ENCODE measurements at regions of chr3 and their contacts with region 1.

Region 1: GRCh38 chr3:108221911-108222852 is at the start of gene IFT57:
- DNase-seq: peak; percentile 99
- H3K4me3 ChIP-seq: peak within 1 kb of the TSS; percentile 77 to 86 (median 82)
- H3K27ac ChIP-seq: peak within 1 kb of the TSS; percentile 77 to 80 (median 78)
- H3K4me1 ChIP-seq: peaks cover 12 to 49% (median 47%) of the 10 kb centered on the region in 4 donors
- H3K27me3 ChIP-seq: no peaks in the 10 kb centered on the region
- CTCF ChIP-seq: peak in 1 of 3 experiments; percentile 9
- EP300 ChIP-seq: no peak
- POLR2A ChIP-seq: peak; percentile 30
- total RNA-seq, gene IFT57: 52.3 to 82.4 (median 61.4) TPM

Region 2: DNA sequence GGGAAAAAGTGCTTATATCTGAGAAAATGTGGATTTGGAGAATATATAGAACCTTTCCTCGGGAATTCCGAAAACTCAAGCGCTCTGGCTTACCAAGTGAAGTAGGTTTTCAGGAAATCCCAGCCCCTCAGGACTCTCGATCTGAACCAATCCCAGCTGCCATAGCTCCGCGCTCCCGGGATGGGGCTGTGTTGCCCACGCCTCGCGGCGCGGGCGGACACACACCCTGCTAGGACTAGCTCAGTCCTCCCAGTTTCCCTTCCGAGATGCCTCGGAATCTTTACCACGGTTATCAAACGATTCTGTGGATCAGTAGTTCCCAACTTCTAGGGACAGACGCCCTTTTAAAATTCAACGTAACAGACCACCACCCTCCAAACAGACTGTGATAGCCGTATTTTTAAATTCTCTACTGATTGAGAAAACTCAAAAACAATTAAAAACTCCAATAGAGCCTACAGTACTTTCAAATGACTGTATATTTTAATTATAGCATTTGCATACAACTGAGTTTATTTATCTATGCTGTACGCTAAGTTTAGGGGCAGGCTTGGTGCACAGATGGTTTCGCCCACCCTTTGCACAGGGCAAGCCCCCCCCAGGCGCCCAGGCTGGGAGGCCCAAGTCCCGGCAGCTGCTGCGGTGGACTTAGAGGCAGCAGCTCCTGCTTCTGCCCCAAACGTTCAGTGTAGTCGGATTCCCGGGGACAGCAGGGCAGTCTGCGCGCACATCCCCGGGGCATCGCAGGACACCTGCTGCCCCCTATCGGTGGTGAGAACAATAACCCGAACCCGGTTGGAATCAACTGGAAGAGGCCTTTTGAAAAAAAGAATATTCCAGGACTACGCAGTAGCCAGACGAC is 792.6 kb before region 1 on chr3:
- intact Hi-C with region 1: loop called (anchors 5 kb)
- DNase-seq: no peak
- H3K4me3 ChIP-seq: peak overlapping the region; percentile 80 to 96 (median 87)
- H3K27ac ChIP-seq: peak overlapping the region; percentile 97 to 99 (median 97)
- H3K4me1 ChIP-seq: peaks cover 5 to 26% (median 18%) of the 10 kb centered on the region in 4 donors
- H3K27me3 ChIP-seq: no peaks in the 10 kb centered on the region
- CTCF ChIP-seq: peak; percentile 73 to 89 (median 88)
- EP300 ChIP-seq: no peak
- POLR2A ChIP-seq: no peak

Region 3: GRCh38 chr3:107927361-107928083 is 294.7 kb before region 1 on chr3:
- intact Hi-C with region 1: loop called (anchors 10 kb)
- DNase-seq: no peak
- H3K4me3 ChIP-seq: peak overlapping the region; percentile 59 to 64 (median 61)
- H3K27ac ChIP-seq: peak overlapping the region in 3 of 4 donors; percentile 21 to 53 (median 31)
- H3K4me1 ChIP-seq: peaks cover 5 to 23% (median 19%) of the 10 kb centered on the region in 4 donors
- H3K27me3 ChIP-seq: no peaks in the 10 kb centered on the region
- CTCF ChIP-seq: peak; percentile 76 to 96 (median 93)
- EP300 ChIP-seq: no peak
- POLR2A ChIP-seq: no peak

Region 4: GRCh38 chr3:108090701-108091451 is 131.3 kb before region 1 on chr3 and contains the start of gene CD47:
- intact Hi-C with region 1: loop called (anchors 2 kb)
- DNase-seq: peak; percentile 97
- H3K4me3 ChIP-seq: peak within 1 kb of the TSS; percentile 79 to 100 (median 94)
- H3K27ac ChIP-seq: peak within 1 kb of the TSS; percentile 91 to 96 (median 94)
- H3K4me1 ChIP-seq: peaks cover 2 to 47% (median 34%) of the 10 kb centered on the region in 4 donors
- H3K27me3 ChIP-seq: no peaks in the 10 kb centered on the region
- CTCF ChIP-seq: peak in 1 of 3 experiments; percentile 9
- EP300 ChIP-seq: no peak
- POLR2A ChIP-seq: peak; percentile 4
- total RNA-seq, gene CD47: 31.6 to 57.7 (median 49.7) TPM